B cell (primary cell): ENCODE measurements at regions of chr20 and their contacts with region 1.

Region 1: DNA sequence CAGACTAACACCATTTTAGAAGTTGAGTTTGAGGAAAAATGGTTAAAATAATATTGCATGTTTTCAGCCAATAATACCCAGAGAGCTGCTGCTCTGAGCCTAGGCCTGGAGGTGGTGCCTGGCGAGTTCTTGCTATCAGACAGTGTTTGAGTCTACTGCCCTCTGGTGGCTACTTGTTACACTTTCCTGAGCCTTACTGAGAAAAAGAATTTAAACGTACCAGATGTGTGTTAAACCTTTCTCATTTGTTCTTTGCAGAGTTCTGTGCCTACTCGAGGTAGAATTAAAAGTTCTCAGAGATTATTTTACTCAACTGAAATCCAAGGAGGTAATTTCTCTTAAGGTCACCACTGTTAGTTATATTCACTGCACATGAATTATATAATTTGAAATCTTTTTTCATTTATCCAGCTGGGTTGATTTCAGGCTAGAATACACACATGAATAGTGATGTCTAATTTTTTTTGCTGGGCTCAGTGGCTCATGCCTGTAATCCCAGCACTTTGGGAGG is 38.2 kb downstream of the SHLD1 start:
- DNase-seq: peak; percentile 89
- ATAC-seq: peak; percentile 99
- H3K4me3 ChIP-seq: no peak overlapping the region
- H3K4me3 Mint-ChIP-seq: no peak overlapping the region
- H3K27ac ChIP-seq: no peak overlapping the region
- H3K27ac Mint-ChIP-seq: peak overlapping the region; percentile 17
- H3K4me1 ChIP-seq: no peaks in the 10 kb centered on the region
- H3K4me1 Mint-ChIP-seq: peaks cover 11% of the 10 kb centered on the region
- H3K27me3 ChIP-seq: no peaks in the 10 kb centered on the region
- H3K27me3 Mint-ChIP-seq: no peaks in the 10 kb centered on the region
- CTCF ChIP-seq: peak; percentile 96

Region 2: GRCh38 chr20:5557123-5557522 is 231.3 kb before region 1 on chr20:
- CTCF ChIA-PET with region 1: interaction called, 52 read pairs
- POLR2A ChIA-PET with region 1: no interaction called
- intact Hi-C with region 1: loop called (anchors 1 kb)
- DNase-seq: peak; percentile 63
- ATAC-seq: peak; percentile 49
- H3K4me3 ChIP-seq: no peak overlapping the region
- H3K4me3 Mint-ChIP-seq: no peak overlapping the region
- H3K27ac ChIP-seq: no peak overlapping the region
- H3K27ac Mint-ChIP-seq: no peak overlapping the region
- H3K4me1 ChIP-seq: no peaks in the 10 kb centered on the region
- H3K4me1 Mint-ChIP-seq: peaks cover 1% of the 10 kb centered on the region
- H3K27me3 ChIP-seq: no peaks in the 10 kb centered on the region
- H3K27me3 Mint-ChIP-seq: no peaks in the 10 kb centered on the region
- CTCF ChIP-seq: peak; percentile 69

Region 3: GRCh38 chr20:5586720-5587119 is 201.7 kb before region 1 on chr20:
- CTCF ChIA-PET with region 1: interaction called, 14 read pairs
- POLR2A ChIA-PET with region 1: no interaction called
- intact Hi-C with region 1: no loop called
- DNase-seq: peak; percentile 64
- ATAC-seq: peak; percentile 71
- H3K4me3 ChIP-seq: no peak overlapping the region
- H3K4me3 Mint-ChIP-seq: peak overlapping the region; percentile 48
- H3K27ac ChIP-seq: peak overlapping the region in 1 of 2 donors; percentile 59
- H3K27ac Mint-ChIP-seq: peak overlapping the region; percentile 82
- H3K4me1 ChIP-seq: peaks cover 14 to 29% of the 10 kb centered on the region in 2 donors
- H3K4me1 Mint-ChIP-seq: peaks cover 33% of the 10 kb centered on the region
- H3K27me3 ChIP-seq: no peaks in the 10 kb centered on the region
- H3K27me3 Mint-ChIP-seq: no peaks in the 10 kb centered on the region
- CTCF ChIP-seq: no peak

Region 4: DNA sequence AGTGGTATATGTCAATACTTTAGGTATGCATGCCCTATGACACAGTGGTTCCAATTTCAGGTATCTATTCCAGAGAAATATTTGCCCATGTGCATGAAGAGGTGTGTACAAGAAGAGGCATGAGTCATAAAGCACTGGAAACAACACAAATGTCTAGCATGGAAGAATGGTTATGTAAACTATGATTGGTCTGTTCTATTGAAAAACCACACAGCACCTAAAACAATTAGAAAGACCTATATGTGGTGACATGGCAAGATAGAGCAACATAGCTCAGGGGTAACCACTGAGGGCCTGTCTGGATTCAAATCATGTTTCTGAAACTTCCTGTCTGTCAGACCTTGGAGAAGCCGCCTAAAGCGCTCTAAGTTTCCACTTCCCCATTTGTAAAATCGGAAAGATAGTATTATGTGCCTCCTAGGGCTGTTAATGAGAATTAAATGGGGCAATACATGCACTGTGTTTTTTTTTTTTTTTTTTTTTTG is 114.2 kb before region 1 on chr20:
- CTCF ChIA-PET with region 1: interaction called, 8 read pairs
- POLR2A ChIA-PET with region 1: no interaction called
- intact Hi-C with region 1: loop called (anchors 5 kb)
- DNase-seq: peak; percentile 84
- ATAC-seq: peak; percentile 93
- H3K4me3 ChIP-seq: peak overlapping the region in 1 of 5 experiments; percentile 6
- H3K4me3 Mint-ChIP-seq: peak overlapping the region; percentile 44
- H3K27ac ChIP-seq: peak overlapping the region in 1 of 2 donors; percentile 78
- H3K27ac Mint-ChIP-seq: peak overlapping the region; percentile 42
- H3K4me1 ChIP-seq: peaks cover 28 to 33% of the 10 kb centered on the region in 2 donors
- H3K4me1 Mint-ChIP-seq: peaks cover 26% of the 10 kb centered on the region
- H3K27me3 ChIP-seq: no peaks in the 10 kb centered on the region
- H3K27me3 Mint-ChIP-seq: no peaks in the 10 kb centered on the region
- CTCF ChIP-seq: peak; percentile 25

Region 5: GRCh38 chr20:5822569-5822968 is 34.1 kb after region 1 on chr20:
- CTCF ChIA-PET with region 1: interaction called, 13 read pairs
- POLR2A ChIA-PET with region 1: no interaction called
- intact Hi-C with region 1: no loop called
- DNase-seq: peak; percentile 19
- ATAC-seq: peak; percentile 57
- H3K4me3 ChIP-seq: no peak overlapping the region
- H3K4me3 Mint-ChIP-seq: no peak overlapping the region
- H3K27ac ChIP-seq: no peak overlapping the region
- H3K27ac Mint-ChIP-seq: peak overlapping the region; percentile 59
- H3K4me1 ChIP-seq: peaks cover 8 to 15% of the 10 kb centered on the region in 2 donors
- H3K4me1 Mint-ChIP-seq: peaks cover 26% of the 10 kb centered on the region
- H3K27me3 ChIP-seq: no peaks in the 10 kb centered on the region
- H3K27me3 Mint-ChIP-seq: no peaks in the 10 kb centered on the region
- CTCF ChIP-seq: no peak